Right ventricle myocardium inferior (tissue), 1 donor: ENCODE measurements at regions of chr11 and their contacts with region 1.

Region 1: DNA sequence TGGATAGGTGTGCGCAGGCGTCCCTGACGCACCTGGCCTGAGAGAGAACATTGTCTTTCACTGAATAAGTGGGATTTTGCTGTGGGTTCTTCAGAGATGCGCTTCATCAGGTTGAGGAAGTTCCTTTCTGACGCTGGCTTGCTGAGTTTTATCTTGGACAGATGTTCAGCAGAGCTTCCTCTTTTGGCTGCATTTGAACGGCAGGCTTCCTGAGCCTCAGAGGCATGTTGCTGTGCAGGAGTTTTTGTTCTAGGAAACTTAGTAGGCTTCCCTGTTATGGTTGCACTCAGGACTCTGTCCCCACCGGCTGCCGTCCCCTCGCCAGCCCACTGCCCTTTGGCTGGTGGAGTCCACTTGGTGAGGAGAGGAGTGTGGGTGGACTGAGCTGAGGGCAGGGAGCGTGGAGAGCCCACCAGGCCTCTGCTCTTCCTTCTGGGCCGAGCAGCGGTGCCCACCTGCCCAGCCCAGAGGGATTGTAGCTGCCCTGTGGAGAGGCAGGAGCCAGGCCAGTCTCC is 17.2 kb downstream of the FRMD8 start:
- DNase-seq: peak; percentile 56
- ATAC-seq: peak; percentile 48

Region 2: DNA sequence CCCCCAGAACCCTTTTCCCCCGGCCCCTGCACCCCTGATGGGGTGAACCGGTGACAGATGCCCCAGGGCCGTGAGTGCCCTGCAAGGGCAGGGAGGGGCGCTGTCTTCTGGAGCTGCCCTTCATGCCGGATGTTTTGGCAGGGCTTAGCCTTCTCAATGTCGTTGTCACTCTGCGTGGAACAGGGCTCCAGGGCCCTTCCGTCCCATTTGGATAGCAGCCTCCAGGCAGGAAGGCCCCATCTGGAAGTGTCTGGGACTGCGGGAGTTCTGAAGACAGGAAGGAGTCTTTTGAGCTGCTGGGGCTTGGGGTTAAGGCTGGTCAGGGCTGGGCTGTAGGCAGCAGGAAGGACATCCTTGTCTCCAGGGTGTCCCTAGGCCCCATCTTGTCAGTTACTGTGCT is 12.7 kb before region 1 on chr11:
- intact Hi-C with region 1: loop called (anchors 2 kb)
- DNase-seq: peak; percentile 30
- ATAC-seq: peak; percentile 37